ENCODE measurements at regions of chr5 and their contacts with region 1.

Region 1: GRCh38 chr5:110757118-110757729 is 18.4 kb downstream of the SLC25A46 start:
- DNase-seq: no peak
- ATAC-seq: peak in 1 of 4 donors; percentile 69
- H3K4me3 ChIP-seq: no peak overlapping the region
- H3K27ac ChIP-seq: no peak overlapping the region
- H3K4me1 ChIP-seq: no peaks in the 10 kb centered on the region
- H3K27me3 ChIP-seq: no peaks in the 10 kb centered on the region
- CTCF ChIP-seq: peak; percentile 71

Region 2: GRCh38 chr5:110401881-110402280 is 355.3 kb before region 1 on chr5:
- intact Hi-C with region 1: no loop called
- DNase-seq: no peak
- ATAC-seq: no peak
- H3K4me3 ChIP-seq: no peak overlapping the region
- H3K27ac ChIP-seq: no peak overlapping the region
- H3K4me1 ChIP-seq: no peaks in the 10 kb centered on the region
- H3K27me3 ChIP-seq: no peaks in the 10 kb centered on the region
- CTCF ChIP-seq: no peak

Region 3: DNA sequence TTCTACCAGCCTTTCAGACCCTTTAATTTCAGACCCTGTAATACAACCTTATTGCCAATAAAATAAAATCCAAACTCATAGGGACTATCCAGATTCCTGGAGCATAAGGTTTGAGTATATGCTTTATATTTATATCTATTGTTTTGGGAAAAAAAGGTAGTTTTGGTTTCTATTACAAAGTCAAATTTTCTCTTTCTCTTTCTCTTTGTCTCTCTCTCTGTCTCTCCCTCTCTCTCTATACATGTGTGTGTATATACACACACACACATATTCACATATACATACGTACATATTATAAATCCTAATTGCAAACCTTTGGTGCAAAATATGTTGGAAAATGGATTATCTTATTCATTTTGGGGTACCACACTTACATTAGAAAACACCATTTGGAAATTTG is 69.7 kb before region 1 on chr5:
- intact Hi-C with region 1: no loop called
- DNase-seq: no peak
- ATAC-seq: no peak
- H3K4me3 ChIP-seq: no peak overlapping the region
- H3K27ac ChIP-seq: no peak overlapping the region
- H3K4me1 ChIP-seq: no peaks in the 10 kb centered on the region
- H3K27me3 ChIP-seq: no peaks in the 10 kb centered on the region
- CTCF ChIP-seq: no peak

Region 4: GRCh38 chr5:111092062-111092853 is 335.0 kb after region 1 on chr5 and contains the start of gene WDR36:
- intact Hi-C with region 1: loop called in 1 of 2 experiments (anchors 10 kb)
- DNase-seq: peak; percentile 89 to 93
- ATAC-seq: peak; percentile 99
- H3K4me3 ChIP-seq: peak within 1 kb of the TSS; percentile 81
- H3K27ac ChIP-seq: peak within 1 kb of the TSS; percentile 86
- H3K4me1 ChIP-seq: peaks cover 18% of the 10 kb centered on the region
- H3K27me3 ChIP-seq: peaks cover 0 to 5% (median 0%) of the 10 kb centered on the region in 3 donors
- CTCF ChIP-seq: no peak
- total RNA-seq, gene WDR36: 13.2 to 22.0 (median 20.1) TPM

Measured in psoas muscle (tissue), 8 donors.